ENCODE measurements at regions of chr4 and their contacts with region 1.

Region 1: DNA sequence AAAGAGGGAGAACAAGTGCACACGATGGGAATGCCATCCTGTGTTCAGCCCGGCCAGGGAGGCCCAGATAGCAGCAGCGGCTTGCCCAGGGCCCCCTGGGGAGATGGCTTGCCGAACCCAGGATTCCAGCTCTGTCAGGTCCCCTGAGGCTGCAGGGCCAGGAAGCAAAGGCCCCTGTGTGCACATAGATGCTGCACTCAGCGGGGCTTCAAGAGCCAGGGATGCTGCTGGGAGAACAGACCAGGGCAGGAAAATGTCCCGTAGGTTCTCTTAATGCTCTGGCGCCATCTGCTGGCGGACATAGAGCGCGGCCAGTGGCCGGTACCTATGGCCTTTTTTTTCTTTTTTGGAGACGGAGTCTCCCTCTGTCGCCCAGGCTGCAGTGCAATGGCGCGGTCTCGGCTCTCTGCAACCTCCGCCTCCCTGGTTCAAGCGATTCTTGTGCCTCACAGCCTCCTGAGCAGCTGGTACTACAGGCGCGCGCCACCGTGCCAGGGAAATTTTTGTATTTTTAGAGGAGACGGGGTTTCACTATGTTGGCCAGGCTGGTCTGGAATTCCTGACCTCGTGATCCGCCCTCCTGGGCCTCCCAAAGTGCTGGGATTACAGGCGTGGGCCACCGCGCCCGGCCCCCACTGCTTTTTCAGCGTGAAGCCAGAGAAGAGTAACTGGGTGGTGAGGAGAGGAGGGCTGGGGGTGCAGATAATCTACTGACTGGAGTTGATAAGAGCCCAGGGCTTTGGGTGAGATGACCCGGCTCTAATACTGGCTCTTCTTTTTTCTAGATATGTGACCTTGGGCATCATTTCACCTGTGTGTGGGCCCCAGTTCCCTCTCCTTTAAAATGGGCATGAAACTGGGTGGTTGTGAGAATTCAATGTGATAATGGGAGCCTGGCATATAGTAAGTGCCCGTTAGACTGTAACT is 22.5 kb downstream of the MED28 start:
- DNase-seq: peak; percentile 66
- ATAC-seq: peak; percentile 75
- H3K4me3 Mint-ChIP-seq: no peak overlapping the region
- H3K27ac Mint-ChIP-seq: no peak overlapping the region
- H3K4me1 Mint-ChIP-seq: peaks cover 2% of the 10 kb centered on the region
- H3K27me3 Mint-ChIP-seq: no peaks in the 10 kb centered on the region
- CTCF ChIP-seq: peak; percentile 44

Region 2: GRCh38 chr4:17544205-17544604 is 92.8 kb before region 1 on chr4:
- CTCF ChIA-PET with region 1: interaction called, 49 read pairs
- POLR2A ChIA-PET with region 1: no interaction called
- intact Hi-C with region 1: loop called (anchors 1 kb)
- DNase-seq: no peak
- ATAC-seq: no peak
- H3K4me3 Mint-ChIP-seq: no peak overlapping the region
- H3K27ac Mint-ChIP-seq: no peak overlapping the region
- H3K4me1 Mint-ChIP-seq: peaks cover 3% of the 10 kb centered on the region
- H3K27me3 Mint-ChIP-seq: peaks cover 9% of the 10 kb centered on the region
- CTCF ChIP-seq: no peak

Region 3: DNA sequence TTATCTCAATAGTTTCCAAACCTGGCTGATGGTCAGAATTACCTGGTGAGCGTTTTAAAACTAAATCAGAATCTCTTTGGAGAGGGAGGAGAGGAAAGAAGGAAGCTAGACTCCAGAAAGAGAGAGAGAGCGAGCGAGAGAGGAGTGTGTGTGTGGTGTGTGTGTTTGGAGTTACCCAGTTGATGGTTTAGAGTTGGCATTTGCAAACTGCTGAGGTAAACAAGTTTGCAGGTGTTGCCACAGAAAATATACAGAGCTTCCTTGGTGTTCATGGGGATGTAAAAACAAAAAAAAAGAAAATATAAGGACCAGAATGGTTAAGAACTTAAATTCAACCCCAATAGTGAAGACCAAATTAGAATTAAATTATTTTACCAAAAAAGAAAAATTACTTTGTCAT is 86.4 kb before region 1 on chr4:
- CTCF ChIA-PET with region 1: interaction called, 49 read pairs
- POLR2A ChIA-PET with region 1: no interaction called
- intact Hi-C with region 1: loop called (anchors 1 kb)
- DNase-seq: no peak
- ATAC-seq: no peak
- H3K4me3 Mint-ChIP-seq: no peak overlapping the region
- H3K27ac Mint-ChIP-seq: no peak overlapping the region
- H3K4me1 Mint-ChIP-seq: peaks cover 4% of the 10 kb centered on the region
- H3K27me3 Mint-ChIP-seq: peaks cover 11% of the 10 kb centered on the region
- CTCF ChIP-seq: no peak

Region 4: DNA sequence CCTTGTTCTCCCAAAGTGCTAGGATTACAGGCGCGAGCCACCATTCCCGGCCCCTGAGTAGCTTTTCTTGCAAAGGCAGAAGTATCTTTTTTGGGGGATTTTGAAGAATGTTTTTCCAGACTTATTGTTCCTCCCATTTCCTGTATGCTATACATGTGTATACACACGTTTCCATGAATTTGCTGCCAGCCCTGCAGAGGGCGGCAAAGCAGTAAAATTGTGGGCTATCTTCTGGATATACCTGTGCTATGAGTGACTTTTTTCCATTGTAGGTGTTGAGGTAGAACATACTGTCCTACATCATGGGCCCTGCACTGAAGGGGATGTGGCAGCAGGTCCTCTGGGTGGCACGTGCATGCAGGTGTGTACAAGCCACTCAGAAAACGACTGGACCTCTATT is 39.4 kb before region 1 on chr4:
- CTCF ChIA-PET with region 1: interaction called, 4 read pairs
- POLR2A ChIA-PET with region 1: no interaction called
- intact Hi-C with region 1: loop called (anchors 2 kb)
- DNase-seq: no peak
- ATAC-seq: no peak
- H3K4me3 Mint-ChIP-seq: no peak overlapping the region
- H3K27ac Mint-ChIP-seq: no peak overlapping the region
- H3K4me1 Mint-ChIP-seq: peaks cover 32% of the 10 kb centered on the region
- H3K27me3 Mint-ChIP-seq: no peaks in the 10 kb centered on the region
- CTCF ChIP-seq: no peak

Region 5: DNA sequence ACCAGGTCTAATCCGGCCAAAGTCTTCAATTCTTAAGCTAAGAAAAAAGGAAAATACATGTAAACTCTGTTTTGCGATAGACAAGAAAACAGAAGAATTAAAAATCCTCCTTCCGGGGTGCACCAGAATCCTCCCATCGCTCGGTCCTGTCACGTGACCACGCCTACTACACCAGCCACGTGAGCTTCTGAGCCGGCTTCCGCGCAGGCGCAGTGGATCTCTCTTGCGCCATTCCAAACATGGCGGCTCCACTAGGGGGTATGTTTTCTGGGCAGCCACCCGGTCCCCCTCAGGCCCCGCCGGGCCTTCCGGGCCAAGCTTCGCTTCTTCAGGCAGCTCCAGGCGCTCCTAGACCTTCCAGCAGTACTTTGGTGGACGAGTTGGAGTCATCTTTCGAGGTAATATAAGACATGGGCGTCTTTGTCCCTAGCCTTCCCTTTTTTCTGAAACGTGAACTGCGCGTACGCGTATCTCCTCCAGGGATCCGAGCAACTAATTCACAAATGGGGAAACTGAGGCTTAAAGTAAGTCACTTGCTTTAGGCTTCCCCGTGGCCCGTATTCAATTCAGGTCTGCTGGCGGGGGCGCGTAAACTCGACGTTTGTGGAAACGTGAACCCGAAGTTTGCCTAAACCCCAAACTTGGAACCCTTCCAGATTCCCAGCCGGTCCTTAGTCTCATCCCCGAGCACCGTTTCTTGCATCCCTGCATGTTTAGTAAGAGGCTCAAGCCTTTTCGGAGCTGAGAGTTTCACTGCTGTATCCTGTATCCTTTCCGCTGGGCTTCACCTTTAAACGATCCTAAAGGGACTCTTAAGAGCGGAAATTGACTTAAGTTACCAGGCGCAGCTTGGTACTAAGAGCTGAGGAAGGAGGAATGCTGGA is 22.3 kb before region 1 on chr4 and contains the start of gene MED28:
- CTCF ChIA-PET with region 1: no interaction called
- POLR2A ChIA-PET with region 1: no interaction called
- intact Hi-C with region 1: loop called (anchors 2 kb)
- DNase-seq: peak; percentile 89
- ATAC-seq: peak; percentile 86
- H3K4me3 Mint-ChIP-seq: peak within 1 kb of the TSS; percentile 97
- H3K27ac Mint-ChIP-seq: peak within 1 kb of the TSS; percentile 95
- H3K4me1 Mint-ChIP-seq: peaks cover 45% of the 10 kb centered on the region
- H3K27me3 Mint-ChIP-seq: no peaks in the 10 kb centered on the region
- CTCF ChIP-seq: no peak
- total RNA-seq, gene MED28: 71.9 and 74.6 TPM in 2 replicates

Region 6: GRCh38 chr4:17810260-17811077 is 173.5 kb after region 1 on chr4 and contains the starts of genes DCAF16 and NCAPG:
- CTCF ChIA-PET with region 1: no interaction called
- POLR2A ChIA-PET with region 1: no interaction called
- intact Hi-C with region 1: loop called (anchors 2 kb)
- DNase-seq: peak; percentile 98
- ATAC-seq: peak; percentile 93
- H3K4me3 Mint-ChIP-seq: peak within 1 kb of the TSS; percentile 96
- H3K27ac Mint-ChIP-seq: peak within 1 kb of the TSS; percentile 96
- H3K4me1 Mint-ChIP-seq: peaks cover 57% of the 10 kb centered on the region
- H3K27me3 Mint-ChIP-seq: no peaks in the 10 kb centered on the region
- CTCF ChIP-seq: no peak
- total RNA-seq, gene DCAF16: 42.9 and 57.2 TPM in 2 replicates
- total RNA-seq, gene NCAPG: 1.1 and 1.5 TPM in 2 replicates

Region 7: DNA sequence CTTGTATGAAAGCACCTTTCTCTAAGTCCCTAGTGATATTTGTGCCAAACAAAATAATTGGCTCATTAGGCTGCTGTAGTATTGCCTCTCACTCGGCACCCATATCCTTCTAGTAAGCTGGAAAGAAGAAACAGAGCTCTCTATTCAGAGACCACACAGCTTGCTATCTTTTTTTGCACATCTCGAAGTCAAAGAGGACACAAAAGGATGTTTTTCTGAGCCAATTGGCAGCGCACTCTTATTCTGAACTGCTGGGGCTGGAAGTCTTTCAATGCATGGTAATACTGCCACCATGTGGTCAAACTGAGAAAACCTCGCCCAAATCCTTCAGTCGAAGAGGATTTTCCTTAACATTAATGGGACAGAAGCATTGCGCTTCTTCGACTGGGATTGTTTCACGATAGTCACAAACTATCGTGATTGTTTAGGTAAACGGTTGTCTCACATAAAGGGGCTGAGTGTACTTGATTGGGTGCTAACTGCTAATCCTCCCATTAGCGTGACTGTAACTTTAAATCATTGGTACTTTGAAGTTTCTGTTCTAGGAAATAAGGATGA is 956.6 kb after region 1 on chr4:
- CTCF ChIA-PET with region 1: no interaction called
- POLR2A ChIA-PET with region 1: no interaction called
- intact Hi-C with region 1: loop called (anchors 1 kb)
- DNase-seq: no peak
- ATAC-seq: no peak
- H3K4me3 Mint-ChIP-seq: no peak overlapping the region
- H3K27ac Mint-ChIP-seq: no peak overlapping the region
- H3K4me1 Mint-ChIP-seq: peaks cover 3% of the 10 kb centered on the region
- H3K27me3 Mint-ChIP-seq: peaks cover 10% of the 10 kb centered on the region
- CTCF ChIP-seq: peak; percentile 51

Measured in activated B cell treated with CpG ODN at 0.5 μM for 24 hours (primary cell).